GM12878 (cell line): ENCODE measurements at regions of chr16 and their contacts with region 1.

Region 1: DNA sequence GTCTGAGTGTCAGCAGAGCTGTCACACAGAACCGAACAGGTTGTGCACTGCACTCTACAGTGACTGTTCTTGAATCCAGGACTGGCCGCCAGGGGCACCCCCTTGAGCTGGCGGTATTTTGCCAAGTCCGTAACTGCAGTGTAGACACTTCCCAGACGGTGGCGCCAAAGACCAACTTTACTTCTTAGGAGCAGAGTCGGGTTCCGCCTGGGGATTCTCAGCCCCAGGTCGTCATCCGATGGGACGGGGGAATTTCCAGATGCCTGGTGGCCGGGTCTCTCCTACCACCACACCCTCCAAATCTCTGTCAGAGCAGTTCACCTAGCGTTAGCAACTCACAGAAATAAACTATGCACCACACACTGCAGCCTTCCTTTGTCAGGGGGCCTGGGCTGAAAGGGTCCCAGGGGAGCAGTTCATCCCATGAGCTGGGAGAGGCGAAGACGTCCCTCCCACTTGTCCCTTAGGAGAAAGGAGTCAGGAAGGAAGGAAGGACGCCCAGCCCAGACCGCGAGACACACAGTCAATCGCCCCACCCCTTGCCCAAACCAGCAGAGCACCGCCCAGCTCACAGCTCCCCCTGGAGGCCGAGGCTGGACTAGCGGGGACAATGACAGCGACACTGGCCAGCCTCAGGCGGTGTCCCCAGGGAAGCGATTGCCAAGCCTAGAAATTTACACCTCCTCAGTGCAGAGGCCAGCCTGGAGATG is 7.4 kb upstream of the RIPOR1 start:
- DNase-seq: peak; percentile 87
- ATAC-seq: peak; percentile 86
- H3K4me3 ChIP-seq: peak overlapping the region; percentile 70; the same call in 1 of the 2 replicates
- H3K27ac ChIP-seq: peak overlapping the region; percentile 98
- H3K4me1 ChIP-seq: peaks cover 27% of the 10 kb centered on the region
- H3K27me3 ChIP-seq: no peaks in the 10 kb centered on the region
- CTCF ChIP-seq: peak; percentile 91 to 100 (median 99); a peak in 5 of 6 replicates
- EP300 ChIP-seq: no peak
- POLR2A ChIP-seq: peak; percentile 56
- RAD21 ChIP-seq: peak; percentile 83

Region 2: DNA sequence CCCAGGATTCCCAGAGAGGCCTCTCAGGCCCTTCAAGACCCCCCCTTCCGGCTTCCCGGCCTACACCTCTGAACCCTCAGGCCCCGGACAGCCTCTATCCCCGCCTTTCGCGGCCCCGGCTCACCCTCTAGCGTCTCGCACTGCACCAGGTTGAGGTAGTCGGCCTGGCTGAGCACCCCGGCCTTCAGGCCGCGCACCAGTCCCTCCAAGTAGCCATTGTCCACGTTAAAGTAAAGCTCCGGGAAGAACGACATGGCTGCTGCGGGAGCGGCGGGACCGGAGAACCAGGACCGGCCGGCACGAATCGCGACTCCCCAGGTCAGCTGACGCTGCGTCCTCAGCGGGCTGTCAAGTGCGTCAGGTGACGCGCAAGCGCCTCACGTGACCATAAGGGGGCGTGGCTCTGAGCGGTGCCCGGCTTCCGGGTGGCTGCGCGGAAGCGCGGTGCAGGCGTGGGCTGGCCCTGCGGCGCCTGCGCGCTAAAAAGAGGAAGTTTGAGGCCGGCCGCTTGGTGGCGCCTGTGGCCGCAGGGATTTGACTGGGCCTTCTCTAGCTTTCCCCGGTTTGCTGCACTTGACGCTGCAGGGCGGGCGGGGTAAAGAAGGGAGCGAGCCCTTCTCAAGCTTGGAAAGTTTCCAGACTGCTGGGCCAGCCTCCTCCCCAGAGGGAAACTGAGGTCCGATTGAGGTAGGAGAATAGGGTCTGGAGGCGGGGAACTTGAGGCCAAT is 40.3 kb before region 1 on chr16 and contains the start of gene ATP6V0D1:
- CTCF ChIA-PET with region 1: interaction called, 252 read pairs
- POLR2A ChIA-PET with region 1: interaction called, 9 read pairs
- RAD21 ChIA-PET with region 1: interaction called, 79 read pairs
- SMC1A ChIA-PET with region 1: interaction called, 88 read pairs
- in situ Hi-C with region 1: loop called (anchors 5 kb)
- intact Hi-C with region 1: no loop called
- DNase-seq: peak; percentile 94
- ATAC-seq: peak; percentile 92
- H3K4me3 ChIP-seq: peak within 1 kb of the TSS; percentile 87
- H3K27ac ChIP-seq: peak within 1 kb of the TSS; percentile 86
- H3K4me1 ChIP-seq: peaks cover 19% of the 10 kb centered on the region
- H3K27me3 ChIP-seq: no peaks in the 10 kb centered on the region
- CTCF ChIP-seq: peak; percentile 82 to 97 (median 93); a peak in 5 of 6 replicates
- EP300 ChIP-seq: 0 out of 4 replicates have a peak, but pooled peaks of 1 of the 2 experiments have one; percentile 13
- POLR2A ChIP-seq: peak; percentile 86
- RAD21 ChIP-seq: peak; percentile 81
- polyA plus RNA-seq, gene ATP6V0D1: 28.1 to 30.2 TPM

Region 3: DNA sequence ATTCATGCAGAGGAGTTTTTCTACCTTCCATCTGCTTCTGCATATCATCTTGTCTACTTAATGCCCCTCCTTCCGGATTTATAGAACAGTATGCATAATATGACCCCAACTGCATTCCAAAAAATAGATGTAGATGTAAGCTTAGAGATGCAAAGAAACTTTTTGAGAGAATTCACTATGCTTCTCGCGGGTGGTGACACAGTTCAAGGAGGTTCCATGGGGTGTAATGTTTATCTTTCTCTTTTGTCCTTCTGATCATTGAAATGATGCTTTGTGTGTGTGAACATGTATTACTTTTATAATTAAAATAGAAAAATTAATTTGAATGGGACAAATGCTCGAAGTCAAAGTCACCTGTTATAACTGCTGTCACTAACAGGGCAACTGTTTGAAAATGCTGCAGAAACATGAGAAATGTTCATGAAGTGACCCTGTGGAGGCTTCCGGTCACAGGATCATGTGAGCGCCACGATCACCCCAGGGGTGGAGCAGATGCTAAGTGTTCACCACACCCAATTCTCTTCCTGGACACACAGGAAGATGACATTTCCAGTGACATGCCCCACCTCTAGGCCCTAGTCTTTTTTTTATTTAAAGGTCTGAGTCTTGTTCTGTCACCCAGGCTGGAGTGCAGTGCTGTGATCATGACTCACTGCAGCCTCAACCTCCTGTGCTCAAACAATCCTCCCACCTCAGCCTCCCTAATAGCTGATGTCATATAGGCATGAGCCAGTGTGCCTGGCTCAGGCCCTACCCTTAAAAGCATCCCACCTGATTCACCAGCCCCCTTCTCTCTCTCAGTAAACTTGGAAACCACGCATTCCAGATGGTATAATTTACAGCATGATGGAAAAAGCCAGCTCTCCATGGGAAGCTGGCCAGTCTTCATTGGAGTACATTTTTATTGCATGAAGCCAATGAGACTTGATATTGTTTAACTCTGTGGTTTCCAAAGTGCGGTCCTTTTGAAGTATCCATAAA is 16.9 kb before region 1 on chr16:
- CTCF ChIA-PET with region 1: interaction called, 453 read pairs
- POLR2A ChIA-PET with region 1: no interaction called
- RAD21 ChIA-PET with region 1: interaction called, 5 read pairs
- SMC1A ChIA-PET with region 1: interaction called, 78 read pairs
- in situ Hi-C with region 1: no loop called
- intact Hi-C with region 1: no loop called
- DNase-seq: no peak
- ATAC-seq: peak; percentile 25; the same call in 2 of the 3 replicates
- H3K4me3 ChIP-seq: no peak overlapping the region
- H3K27ac ChIP-seq: no peak overlapping the region
- H3K4me1 ChIP-seq: peaks cover 15% of the 10 kb centered on the region
- H3K27me3 ChIP-seq: no peaks in the 10 kb centered on the region
- CTCF ChIP-seq: no peak
- EP300 ChIP-seq: no peak
- POLR2A ChIP-seq: no peak
- RAD21 ChIP-seq: no peak

Region 4: GRCh38 chr16:67555795-67556212 is 34.6 kb after region 1 on chr16:
- CTCF ChIA-PET with region 1: interaction called, 15 read pairs
- POLR2A ChIA-PET with region 1: interaction called, 3 read pairs
- RAD21 ChIA-PET with region 1: interaction called, 18 read pairs
- SMC1A ChIA-PET with region 1: interaction called, 14 read pairs
- in situ Hi-C with region 1: no loop called
- intact Hi-C with region 1: no loop called
- DNase-seq: no peak
- ATAC-seq: peak; percentile 73
- H3K4me3 ChIP-seq: no peak overlapping the region
- H3K27ac ChIP-seq: peak overlapping the region; percentile 54
- H3K4me1 ChIP-seq: peaks cover 31% of the 10 kb centered on the region
- H3K27me3 ChIP-seq: no peaks in the 10 kb centered on the region
- CTCF ChIP-seq: no peak
- EP300 ChIP-seq: no peak
- POLR2A ChIP-seq: no peak
- RAD21 ChIP-seq: no peak

Region 5: DNA sequence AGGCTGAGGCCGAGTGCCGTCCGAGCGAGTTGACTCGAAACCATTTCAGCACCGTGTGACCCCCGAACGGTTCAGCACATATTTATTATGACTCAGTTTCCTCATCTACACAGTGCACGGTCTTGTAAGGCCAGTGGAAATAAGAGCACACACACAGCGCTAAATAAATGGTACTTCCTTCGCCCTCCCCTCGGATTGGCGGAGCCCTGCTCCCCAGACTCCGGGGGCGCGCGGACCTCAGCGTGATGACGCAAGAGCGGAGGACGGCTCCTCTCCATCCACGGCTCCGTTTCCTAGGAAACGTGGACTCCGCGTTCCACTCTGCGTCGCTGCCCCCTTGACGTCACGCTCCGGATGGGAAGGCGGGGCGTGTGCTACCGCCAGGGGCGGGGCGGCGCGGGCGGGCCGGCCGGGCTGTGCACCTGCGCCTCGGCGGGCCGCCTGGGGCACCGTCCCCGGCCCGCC is 139.3 kb after region 1 on chr16 and contains the start of gene PARD6A:
- CTCF ChIA-PET with region 1: interaction called, 196 read pairs
- POLR2A ChIA-PET with region 1: interaction called, 4 read pairs
- RAD21 ChIA-PET with region 1: interaction called, 7 read pairs
- SMC1A ChIA-PET with region 1: interaction called, 3 read pairs
- in situ Hi-C with region 1: no loop called
- intact Hi-C with region 1: no loop called
- DNase-seq: peak; percentile 87
- ATAC-seq: peak; percentile 84
- H3K4me3 ChIP-seq: peak within 1 kb of the TSS; percentile 92
- H3K27ac ChIP-seq: peak within 1 kb of the TSS; percentile 80
- H3K4me1 ChIP-seq: peaks cover 10% of the 10 kb centered on the region
- H3K27me3 ChIP-seq: no peaks in the 10 kb centered on the region
- CTCF ChIP-seq: no peak
- EP300 ChIP-seq: no peak
- POLR2A ChIP-seq: no peak
- RAD21 ChIP-seq: no peak
- polyA plus RNA-seq, gene PARD6A: 0.42 to 0.62 TPM

Region 6: DNA sequence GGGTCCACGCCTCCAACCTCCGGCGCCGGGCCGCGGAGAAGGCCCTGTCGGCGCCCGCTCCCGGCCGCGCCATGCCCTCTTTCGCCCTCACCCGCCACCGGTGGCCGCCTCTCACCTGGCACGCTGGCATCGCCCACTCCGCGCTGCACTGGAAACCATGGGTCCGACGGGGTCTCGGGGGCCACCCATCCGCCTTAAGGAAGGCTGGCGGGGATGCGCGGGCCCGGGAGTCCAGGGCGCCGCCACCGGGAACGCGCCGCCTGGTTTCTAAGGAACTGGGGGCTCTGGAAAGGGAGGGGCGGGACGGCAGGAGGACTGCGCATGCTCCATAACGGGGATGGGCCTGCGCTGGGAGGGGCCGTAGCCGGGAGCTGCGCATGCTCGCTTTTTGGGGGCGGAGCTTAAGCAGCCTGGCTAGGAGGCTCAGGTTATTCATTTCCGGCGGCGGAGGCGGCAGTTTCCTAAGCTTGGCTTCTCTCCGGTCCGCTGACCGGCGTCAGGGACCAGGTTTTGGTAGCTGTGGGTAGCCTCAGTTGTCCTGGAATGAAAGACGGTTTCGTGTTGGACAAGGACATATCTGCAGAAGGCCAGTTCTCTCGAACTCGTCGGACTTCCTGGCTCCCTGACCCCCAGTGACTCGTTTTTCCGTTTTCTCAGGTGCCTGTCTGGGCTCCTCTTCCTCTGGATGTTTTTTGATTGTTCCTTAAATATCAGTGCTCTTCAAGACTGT is 198.0 kb after region 1 on chr16 and contains the start of gene GFOD2:
- CTCF ChIA-PET with region 1: interaction called, 11 read pairs
- POLR2A ChIA-PET with region 1: no interaction called
- RAD21 ChIA-PET with region 1: interaction called, 6 read pairs
- SMC1A ChIA-PET with region 1: interaction called, 4 read pairs
- in situ Hi-C with region 1: no loop called
- intact Hi-C with region 1: no loop called
- DNase-seq: peak; percentile 79
- ATAC-seq: peak; percentile 92
- H3K4me3 ChIP-seq: peak within 1 kb of the TSS; percentile 82
- H3K27ac ChIP-seq: peak within 1 kb of the TSS; percentile 95
- H3K4me1 ChIP-seq: peaks cover 11% of the 10 kb centered on the region
- H3K27me3 ChIP-seq: no peaks in the 10 kb centered on the region
- CTCF ChIP-seq: no peak
- EP300 ChIP-seq: no peak
- POLR2A ChIP-seq: peak; percentile 95
- RAD21 ChIP-seq: no peak
- polyA plus RNA-seq, gene GFOD2: 2.0 to 2.2 TPM